ENCODE measurements at regions of chr4 and their contacts with region 1.

Region 1: DNA sequence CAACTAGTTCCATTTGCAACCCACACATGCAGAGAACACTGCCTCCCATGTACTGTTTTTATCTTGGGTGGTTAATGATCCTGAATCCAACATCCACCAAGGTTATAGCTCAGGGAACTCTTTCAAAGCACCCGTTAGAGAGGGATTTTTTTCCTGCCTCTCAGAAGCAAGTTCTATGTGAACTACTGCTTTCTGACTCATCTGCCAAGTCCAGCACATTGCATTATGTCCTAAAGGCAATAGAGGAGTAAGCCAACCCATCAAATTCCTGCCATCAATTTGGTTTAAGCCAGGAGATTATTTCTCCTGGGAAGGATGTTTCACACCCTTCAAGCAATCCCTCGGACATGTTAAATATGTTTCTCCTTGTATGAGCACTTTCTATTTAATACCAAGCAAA is 334.5 kb downstream of the GASK1B start:
- DNase-seq: no peak
- H3K4me3 Mint-ChIP-seq: no peak overlapping the region
- H3K27ac Mint-ChIP-seq: no peak overlapping the region
- H3K4me1 Mint-ChIP-seq: no peaks in the 10 kb centered on the region
- H3K27me3 Mint-ChIP-seq: no peaks in the 10 kb centered on the region
- CTCF ChIP-seq: no peak

Region 2: GRCh38 chr4:157634057-157634456 is 204.3 kb before region 1 on chr4:
- CTCF ChIA-PET with region 1: no interaction called
- intact Hi-C with region 1: no loop called
- DNase-seq: no peak
- H3K4me3 Mint-ChIP-seq: no peak overlapping the region
- H3K27ac Mint-ChIP-seq: no peak overlapping the region
- H3K4me1 Mint-ChIP-seq: no peaks in the 10 kb centered on the region
- H3K27me3 Mint-ChIP-seq: no peaks in the 10 kb centered on the region
- CTCF ChIP-seq: no peak

Region 3: DNA sequence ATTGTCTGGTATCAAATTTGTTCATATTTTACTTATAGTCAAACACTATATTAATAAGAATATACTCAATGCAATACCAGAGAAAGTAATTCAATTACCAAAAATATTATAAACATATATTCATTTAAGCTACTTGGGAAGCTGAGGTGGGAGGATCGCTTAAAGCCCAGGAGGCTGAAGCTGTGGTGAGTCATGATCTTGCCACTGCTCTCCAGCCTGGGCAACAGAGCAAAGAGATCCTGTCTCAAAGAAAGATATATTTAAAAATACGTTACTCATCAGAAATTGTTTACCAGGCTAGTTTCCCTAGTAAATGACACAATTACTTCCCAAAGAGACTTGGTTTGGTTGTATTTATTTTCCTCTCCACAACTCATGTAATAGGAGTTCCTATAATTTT is 99.1 kb before region 1 on chr4:
- CTCF ChIA-PET with region 1: no interaction called
- intact Hi-C with region 1: no loop called
- DNase-seq: peak; percentile 2
- H3K4me3 Mint-ChIP-seq: no peak overlapping the region
- H3K27ac Mint-ChIP-seq: no peak overlapping the region
- H3K4me1 Mint-ChIP-seq: no peaks in the 10 kb centered on the region
- H3K27me3 Mint-ChIP-seq: no peaks in the 10 kb centered on the region
- CTCF ChIP-seq: no peak

Region 4: DNA sequence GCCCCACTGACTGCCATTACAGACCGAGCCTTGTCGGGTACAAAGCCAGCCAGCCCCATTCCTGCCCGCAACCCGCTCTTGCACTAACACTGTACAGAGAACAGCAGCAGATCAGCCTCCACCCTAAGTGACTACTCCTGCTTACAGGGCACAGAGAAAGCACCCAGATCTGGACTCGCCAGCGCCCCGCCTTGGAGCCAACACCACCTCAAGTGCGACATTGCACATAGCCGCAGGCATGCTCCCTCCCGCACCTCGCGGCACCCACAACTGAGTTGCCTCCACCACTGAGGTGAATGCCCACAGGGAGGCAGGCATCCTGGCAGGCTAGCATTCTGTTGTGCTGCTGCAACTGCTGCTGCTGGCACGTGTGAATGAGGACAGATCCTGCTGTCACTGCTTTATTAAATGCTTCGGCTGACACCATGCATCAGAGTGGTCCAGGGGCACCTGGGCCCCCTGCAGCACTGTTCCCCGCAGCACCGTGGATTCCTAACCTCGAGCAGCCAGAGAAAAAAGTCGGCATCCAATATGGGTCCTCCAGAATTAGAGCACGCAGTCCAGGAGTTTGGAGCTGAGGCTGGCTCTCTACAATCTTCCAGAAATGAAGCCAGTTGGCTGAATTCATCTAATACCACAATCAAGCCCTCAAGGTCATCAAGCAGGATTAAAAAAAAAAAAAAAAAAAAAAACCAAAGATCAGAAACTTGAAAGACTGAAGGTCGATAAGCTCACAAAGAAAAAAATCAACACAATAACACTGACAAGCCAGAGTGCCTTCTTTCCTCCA is 18.5 kb before region 1 on chr4:
- CTCF ChIA-PET with region 1: no interaction called
- intact Hi-C with region 1: no loop called
- DNase-seq: no peak
- H3K4me3 Mint-ChIP-seq: no peak overlapping the region
- H3K27ac Mint-ChIP-seq: no peak overlapping the region
- H3K4me1 Mint-ChIP-seq: peaks cover 7% of the 10 kb centered on the region
- H3K27me3 Mint-ChIP-seq: no peaks in the 10 kb centered on the region
- CTCF ChIP-seq: no peak

Region 5: GRCh38 chr4:157880761-157881160 is 42.4 kb after region 1 on chr4:
- CTCF ChIA-PET with region 1: no interaction called
- intact Hi-C with region 1: loop called (anchors 1 kb)
- DNase-seq: no peak
- H3K4me3 Mint-ChIP-seq: no peak overlapping the region
- H3K27ac Mint-ChIP-seq: peak overlapping the region; percentile 73
- H3K4me1 Mint-ChIP-seq: peaks cover 20% of the 10 kb centered on the region
- H3K27me3 Mint-ChIP-seq: no peaks in the 10 kb centered on the region
- CTCF ChIP-seq: no peak

Measured in Calu3 (cell line).